Posterior cingulate gyrus (tissue), 11 donors: ENCODE measurements at regions of chr7 and their contacts with region 1.

Region 1: GRCh38 chr7:131327626-131328376 is at the start of gene MKLN1:
- DNase-seq: peak; percentile 81 to 98 (median 87)

Region 2: GRCh38 chr7:131068604-131069021 is 259.2 kb before region 1 on chr7:
- intact Hi-C with region 1: loop called (anchors 5 kb)
- DNase-seq: no peak

Region 3: DNA sequence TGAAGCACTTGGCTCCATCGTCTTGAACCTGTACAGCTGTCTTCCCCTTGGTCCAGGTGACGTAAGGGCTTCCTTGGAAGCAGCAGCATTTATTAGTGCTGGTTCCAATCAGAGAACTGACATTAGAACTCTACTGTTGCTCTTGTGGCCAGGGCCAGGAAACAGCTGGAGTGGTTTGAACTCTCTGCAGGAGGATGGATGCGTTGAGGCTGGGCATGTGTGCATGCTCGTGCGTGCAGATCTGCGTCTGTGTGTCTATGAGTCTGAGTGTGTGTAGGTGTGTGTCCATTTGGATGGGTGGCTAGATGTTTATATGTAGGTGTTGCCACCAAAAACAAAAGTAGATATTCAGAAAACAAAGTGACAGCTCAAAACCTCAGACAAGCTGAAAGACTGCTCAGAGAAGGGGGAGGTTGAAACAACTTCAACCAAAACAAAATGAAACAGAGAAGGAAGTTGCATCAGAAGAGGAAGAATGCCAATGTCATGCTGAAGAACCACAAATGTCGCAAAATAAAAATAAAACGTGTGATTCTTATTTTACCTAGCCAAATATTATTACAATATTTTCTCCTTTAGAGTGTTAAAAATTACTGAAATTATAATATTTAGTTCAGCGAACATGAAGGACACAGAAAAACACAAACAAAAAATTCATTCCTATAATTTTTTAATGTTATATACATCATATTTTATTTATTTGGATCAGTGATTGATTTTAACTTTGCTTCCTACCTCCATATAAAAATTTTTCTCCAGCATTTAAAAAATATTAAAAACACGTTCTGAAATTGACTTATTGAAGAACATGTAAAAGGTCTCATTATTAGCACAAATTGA is 96.2 kb before region 1 on chr7:
- intact Hi-C with region 1: no loop called
- DNase-seq: peak in 1 of 10 donors; percentile 22